ENCODE measurements at regions of chr2 and their contacts with region 1.

Region 1: GRCh38 chr2:16664052-16664731 is 1.4 kb downstream of the CYRIA start:
- DNase-seq: peak in 2 of 9 donors; percentile 19 to 29
- ATAC-seq: peak; percentile 55
- H3K4me3 ChIP-seq: no peak overlapping the region
- H3K4me3 Mint-ChIP-seq: peak overlapping the region; percentile 27 to 85 (median 62)
- H3K27ac ChIP-seq: no peak overlapping the region
- H3K27ac Mint-ChIP-seq: peak overlapping the region in 3 of 9 donors; percentile 14 to 76 (median 65)
- H3K4me1 ChIP-seq: peaks cover 3 to 4% of the 10 kb centered on the region in 2 donors
- H3K4me1 Mint-ChIP-seq: peaks cover 10 to 39% (median 21%) of the 10 kb centered on the region in 7 donors
- H3K27me3 ChIP-seq: peaks cover 0 to 11% of the 10 kb centered on the region in 2 donors
- H3K27me3 Mint-ChIP-seq: peaks cover 35 to 65% (median 47%) of the 10 kb centered on the region in 5 donors

Region 2: GRCh38 chr2:16623031-16623430 is 41.2 kb before region 1 on chr2:
- CTCF ChIA-PET with region 1: no interaction called
- POLR2A ChIA-PET with region 1: no interaction called
- intact Hi-C with region 1: loop called in 1 of 2 experiments (anchors 5 kb)
- DNase-seq: no peak
- ATAC-seq: no peak
- H3K4me3 ChIP-seq: no peak overlapping the region
- H3K4me3 Mint-ChIP-seq: peak overlapping the region in 6 of 10 donors; percentile 9 to 60 (median 17)
- H3K27ac ChIP-seq: no peak overlapping the region
- H3K27ac Mint-ChIP-seq: peak overlapping the region in 4 of 9 donors; percentile 7 to 47 (median 28)
- H3K4me1 ChIP-seq: peaks cover 0 to 7% of the 10 kb centered on the region in 2 donors
- H3K4me1 Mint-ChIP-seq: peaks cover 38 to 60% (median 48%) of the 10 kb centered on the region in 7 donors
- H3K27me3 ChIP-seq: no peaks in the 10 kb centered on the region
- H3K27me3 Mint-ChIP-seq: no peaks in the 10 kb centered on the region

Measured in naive thymus-derived CD4-positive, alpha-beta T cell (primary cell).